ENCODE measurements at regions of chr7 and their contacts with region 1.

Region 1: GRCh38 chr7:39465055-39465929 is 100.9 kb upstream of the YAE1 start:
- DNase-seq: peak; percentile 83
- H3K4me3 ChIP-seq: peak overlapping the region; percentile 37
- H3K27ac ChIP-seq: no peak overlapping the region
- H3K4me1 ChIP-seq: no peaks in the 10 kb centered on the region
- H3K27me3 ChIP-seq: peaks cover 16% of the 10 kb centered on the region

Region 2: GRCh38 chr7:38660427-38661099 is 804.7 kb before region 1 on chr7:
- in situ Hi-C with region 1: no loop called
- DNase-seq: peak; percentile 81
- H3K4me3 ChIP-seq: no peak overlapping the region
- H3K27ac ChIP-seq: no peak overlapping the region
- H3K4me1 ChIP-seq: peaks cover 9% of the 10 kb centered on the region; the same call in 1 of the 2 replicates
- H3K27me3 ChIP-seq: peaks cover 8% of the 10 kb centered on the region; the same call in 1 of the 2 replicates

Region 3: DNA sequence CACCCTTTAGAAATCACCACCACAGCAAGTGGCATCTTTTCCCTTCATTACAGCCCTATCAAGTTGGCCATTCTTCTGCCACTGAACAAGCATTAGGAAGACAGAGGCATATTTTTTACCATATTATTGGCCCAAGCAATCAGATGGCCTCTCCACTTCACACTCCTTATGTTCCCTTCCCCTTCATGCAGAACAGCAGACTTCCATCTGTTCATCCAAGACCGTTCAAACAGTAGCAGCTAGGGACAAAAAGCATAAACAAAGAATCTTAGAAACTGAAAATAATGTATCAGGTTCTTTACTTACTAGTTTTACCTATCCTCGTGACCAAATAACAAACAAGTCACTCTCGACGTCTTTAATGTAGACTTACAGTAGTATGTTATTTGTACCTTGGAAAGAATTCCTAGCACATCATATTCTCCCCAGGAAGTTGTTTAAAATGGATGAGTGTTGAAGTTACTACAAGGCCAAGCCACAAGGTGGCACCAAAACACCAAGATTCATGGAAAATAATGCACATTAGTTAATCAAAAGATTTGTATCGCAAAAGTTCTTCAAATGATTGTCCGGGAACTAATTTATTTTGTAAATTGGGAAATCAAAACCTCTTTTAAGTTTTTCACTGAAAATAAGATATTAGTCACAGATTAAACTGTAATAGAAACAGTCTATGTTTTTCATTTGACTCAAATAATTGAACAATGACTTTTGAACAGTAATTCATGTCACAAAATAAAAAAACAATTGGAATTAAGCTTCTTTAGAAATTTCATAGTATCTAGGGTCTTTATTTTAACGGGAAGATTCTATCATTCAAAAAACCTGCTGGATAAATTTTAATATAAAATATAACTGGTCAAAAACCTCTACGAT is 668.4 kb before region 1 on chr7:
- in situ Hi-C with region 1: loop called (anchors 25 kb)
- DNase-seq: peak; percentile 66
- H3K4me3 ChIP-seq: no peak overlapping the region
- H3K27ac ChIP-seq: no peak overlapping the region
- H3K4me1 ChIP-seq: 0 out of 2 replicates have a peak, but pooled peaks cover 5% of the 10 kb centered on the region
- H3K27me3 ChIP-seq: no peaks in the 10 kb centered on the region

Region 4: GRCh38 chr7:38932509-38933168 is 532.7 kb before region 1 on chr7:
- in situ Hi-C with region 1: loop called (anchors 10 kb)
- DNase-seq: peak; percentile 64
- H3K4me3 ChIP-seq: no peak overlapping the region
- H3K27ac ChIP-seq: no peak overlapping the region
- H3K4me1 ChIP-seq: peaks cover 5% of the 10 kb centered on the region; the same call in 1 of the 2 replicates
- H3K27me3 ChIP-seq: no peaks in the 10 kb centered on the region

Measured in GM23248 (cell line).